Dorsolateral prefrontal cortex (tissue), 120 donors: ENCODE measurements at regions of chr14 and their contacts with region 1.

Region 1: GRCh38 chr14:103910262-103910935 is 17.9 kb upstream of the TDRD9 start:
- DNase-seq: peak; percentile 39 to 93 (median 78)
- H3K4me3 ChIP-seq: peak overlapping the region in 18 of 59 donors; percentile 0 to 32 (median 12)
- H3K27ac ChIP-seq: peak overlapping the region in 28 of 59 donors; percentile 6 to 65 (median 31)
- H3K27me3 ChIP-seq: no peaks in the 10 kb centered on the region
- CTCF ChIP-seq: peak; percentile 45 to 87 (median 78)

Region 2: GRCh38 chr14:103715052-103716000 is 195.1 kb before region 1 on chr14 and contains the starts of genes XRCC3 and ZFYVE21:
- intact Hi-C with region 1: loop called in 1 of 2 experiments (anchors 10 kb)
- DNase-seq: peak; percentile 98 to 100 (median 99)
- H3K4me3 ChIP-seq: peak within 1 kb of the TSS; percentile 64 to 97 (median 84)
- H3K27ac ChIP-seq: peak within 1 kb of the TSS in 50 of 59 donors; percentile 10 to 99 (median 71)
- H3K27me3 ChIP-seq: no peaks in the 10 kb centered on the region
- CTCF ChIP-seq: peak in 5 of 56 donors; percentile 7 to 33 (median 13)
- total RNA-seq, gene XRCC3: 4.7 to 19.1 (median 9.9) TPM
- total RNA-seq, gene ZFYVE21: 71.0 to 188 (median 111) TPM